H1 (cell line): ENCODE measurements at regions of chr5 and their contacts with region 1.

Region 1: GRCh38 chr5:126676195-126676624 is 75.5 kb downstream of the PHAX start:
- DNase-seq: peak in 1 of 2 experiments; percentile 62
- H3K4me3 ChIP-seq: no peak overlapping the region
- H3K27ac ChIP-seq: no peak overlapping the region
- H3K4me1 ChIP-seq: peaks cover 13 to 31% (median 19%) of the 10 kb centered on the region in 4 experiments
- H3K27me3 ChIP-seq: no peaks in the 10 kb centered on the region
- CTCF ChIP-seq: peak; percentile 3 to 87 (median 87)
- EP300 ChIP-seq: no peak
- POLR2A ChIP-seq: no peak
- RAD21 ChIP-seq: peak; percentile 91 to 95

Region 2: DNA sequence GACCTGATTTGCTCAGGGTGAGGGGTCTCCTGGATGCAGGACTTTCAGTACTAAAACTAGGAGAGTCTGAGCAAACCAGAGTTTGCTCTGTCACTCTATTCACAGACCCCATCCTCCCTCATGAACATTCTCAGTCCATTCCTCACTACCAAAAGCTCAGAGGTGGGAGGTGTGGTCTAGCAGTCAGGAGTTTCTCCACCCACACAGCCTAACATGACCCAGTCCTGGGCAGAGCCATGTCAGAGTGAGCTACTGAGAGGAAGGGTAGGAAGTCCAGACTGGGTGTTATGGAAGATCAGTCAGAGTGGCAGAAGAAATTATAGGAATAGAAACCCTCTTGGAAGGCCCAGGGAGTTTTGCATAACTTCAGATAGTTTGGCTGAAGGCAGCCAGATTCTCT is 366.4 kb before region 1 on chr5:
- CTCF ChIA-PET with region 1: no interaction called
- POLR2A ChIA-PET with region 1: no interaction called
- DNase-seq: no peak
- H3K4me3 ChIP-seq: no peak overlapping the region
- H3K27ac ChIP-seq: no peak overlapping the region
- H3K4me1 ChIP-seq: no peaks in the 10 kb centered on the region
- H3K27me3 ChIP-seq: no peaks in the 10 kb centered on the region; a peak in 1 of 7 replicates
- CTCF ChIP-seq: no peak
- EP300 ChIP-seq: no peak
- POLR2A ChIP-seq: no peak
- RAD21 ChIP-seq: no peak

Region 3: DNA sequence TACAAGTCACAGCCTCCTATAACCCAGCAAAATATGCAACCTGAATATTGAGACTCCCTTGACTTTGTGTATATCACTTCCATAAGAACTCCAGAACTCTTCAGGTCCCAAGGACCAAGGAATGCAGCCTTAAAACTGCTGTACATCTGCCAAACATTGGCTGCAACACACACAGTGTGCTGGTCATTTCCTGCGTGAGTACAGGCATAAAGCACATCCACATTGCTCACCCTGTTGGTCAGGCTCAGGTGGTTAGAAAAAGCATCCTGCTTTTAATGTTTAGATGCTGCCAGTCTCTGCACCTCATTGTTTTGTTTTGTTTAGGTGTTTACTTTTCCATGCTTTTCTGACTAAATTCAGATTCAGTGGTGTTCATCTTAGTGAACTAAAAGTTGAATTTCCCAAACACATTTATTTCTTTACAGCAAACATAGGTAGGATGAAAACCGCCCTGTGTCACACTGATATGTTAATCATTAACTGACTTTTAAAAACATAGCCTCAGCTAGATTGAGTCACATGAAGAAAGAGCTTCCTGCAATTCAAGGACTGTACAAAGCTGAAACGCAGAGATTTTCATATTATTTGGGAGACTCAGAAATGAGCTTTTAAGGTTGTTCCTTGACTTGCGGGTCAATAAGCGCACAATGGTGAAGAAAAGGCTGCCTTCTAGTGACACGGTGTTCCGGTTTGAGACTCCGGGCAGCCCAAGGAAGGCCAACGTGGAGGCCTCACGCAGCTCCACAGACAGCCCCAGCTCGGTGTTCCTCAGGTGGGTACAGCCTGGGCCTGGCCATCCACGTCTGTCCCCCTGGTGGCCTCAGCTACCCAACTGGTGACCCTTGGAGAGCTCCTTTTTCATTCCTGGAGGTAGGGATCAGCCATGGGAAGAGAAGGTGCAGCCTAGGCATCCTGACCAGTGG is 305.2 kb before region 1 on chr5:
- CTCF ChIA-PET with region 1: no interaction called
- POLR2A ChIA-PET with region 1: no interaction called
- DNase-seq: no peak
- H3K4me3 ChIP-seq: no peak overlapping the region
- H3K27ac ChIP-seq: no peak overlapping the region
- H3K4me1 ChIP-seq: peaks cover 9 to 25% (median 23%) of the 10 kb centered on the region in 4 experiments; a peak in 6 of 7 replicates
- H3K27me3 ChIP-seq: no peaks in the 10 kb centered on the region
- CTCF ChIP-seq: peak in 2 of 3 experiments; percentile 21 to 33; a peak in 3 of 4 replicates
- EP300 ChIP-seq: no peak
- POLR2A ChIP-seq: no peak
- RAD21 ChIP-seq: peak in 1 of 2 experiments; percentile 13; a peak in 1 of 4 replicates

Region 4: GRCh38 chr5:126656396-126657007 is 19.7 kb before region 1 on chr5:
- CTCF ChIA-PET with region 1: interaction called, 39 read pairs
- POLR2A ChIA-PET with region 1: interaction called, 3 read pairs
- DNase-seq: no peak
- H3K4me3 ChIP-seq: no peak overlapping the region
- H3K27ac ChIP-seq: no peak overlapping the region
- H3K4me1 ChIP-seq: peaks cover 0 to 4% (median 0%) of the 10 kb centered on the region in 4 experiments; a peak in 1 of 7 replicates
- H3K27me3 ChIP-seq: no peaks in the 10 kb centered on the region
- CTCF ChIP-seq: peak in 2 of 3 experiments; percentile 66 to 68; a peak in 3 of 4 replicates
- EP300 ChIP-seq: no peak
- POLR2A ChIP-seq: no peak
- RAD21 ChIP-seq: peak; percentile 94 to 95

Region 5: DNA sequence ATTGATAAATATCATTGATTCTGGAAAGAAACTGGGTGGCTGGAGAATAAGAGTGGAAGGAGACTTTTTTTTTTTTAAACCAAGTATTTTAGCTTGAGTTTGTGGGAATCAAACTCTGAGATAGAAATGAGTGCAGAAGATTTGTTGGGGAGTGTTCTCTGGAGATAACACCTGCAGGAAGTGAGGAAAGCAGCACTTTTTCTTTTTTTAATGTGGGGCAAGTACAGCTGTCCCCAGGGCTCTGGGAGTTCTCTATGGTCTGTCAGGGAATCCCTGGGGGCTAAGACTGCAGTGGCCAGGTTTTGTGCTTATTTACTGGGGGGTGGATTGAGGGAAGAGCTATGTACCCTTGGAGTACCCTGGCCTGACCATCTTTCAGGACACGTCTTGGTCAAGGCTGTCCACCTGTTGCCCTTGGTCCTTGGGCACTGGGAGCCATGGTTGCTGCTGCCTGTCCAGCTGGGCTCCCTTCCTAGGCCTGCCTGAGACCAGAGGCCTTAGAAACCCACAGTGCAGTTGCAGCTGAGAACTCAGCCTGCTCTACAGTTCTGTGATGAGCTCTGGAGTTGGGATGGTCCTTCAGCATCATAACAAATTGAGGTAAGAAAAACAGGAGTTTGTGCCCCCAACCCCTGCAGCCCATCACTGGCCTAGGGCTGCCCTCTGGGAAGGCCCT is 10.4 kb after region 1 on chr5:
- CTCF ChIA-PET with region 1: interaction called, 42 read pairs
- POLR2A ChIA-PET with region 1: interaction called, 3 read pairs
- DNase-seq: no peak
- H3K4me3 ChIP-seq: no peak overlapping the region
- H3K27ac ChIP-seq: peak overlapping the region; percentile 26; the same call in 1 of the 2 replicates
- H3K4me1 ChIP-seq: peaks cover 1 to 6% (median 2%) of the 10 kb centered on the region in 4 experiments; a peak in 4 of 7 replicates
- H3K27me3 ChIP-seq: no peaks in the 10 kb centered on the region
- CTCF ChIP-seq: no peak
- EP300 ChIP-seq: no peak
- POLR2A ChIP-seq: no peak
- RAD21 ChIP-seq: no peak

Region 6: GRCh38 chr5:126736141-126736540 is 59.9 kb after region 1 on chr5:
- CTCF ChIA-PET with region 1: interaction called, 11 read pairs
- POLR2A ChIA-PET with region 1: no interaction called
- DNase-seq: no peak
- H3K4me3 ChIP-seq: no peak overlapping the region
- H3K27ac ChIP-seq: no peak overlapping the region
- H3K4me1 ChIP-seq: peaks cover 0 to 4% (median 0%) of the 10 kb centered on the region in 4 experiments; a peak in 1 of 7 replicates
- H3K27me3 ChIP-seq: no peaks in the 10 kb centered on the region
- CTCF ChIP-seq: no peak
- EP300 ChIP-seq: no peak
- POLR2A ChIP-seq: no peak
- RAD21 ChIP-seq: no peak

Region 7: DNA sequence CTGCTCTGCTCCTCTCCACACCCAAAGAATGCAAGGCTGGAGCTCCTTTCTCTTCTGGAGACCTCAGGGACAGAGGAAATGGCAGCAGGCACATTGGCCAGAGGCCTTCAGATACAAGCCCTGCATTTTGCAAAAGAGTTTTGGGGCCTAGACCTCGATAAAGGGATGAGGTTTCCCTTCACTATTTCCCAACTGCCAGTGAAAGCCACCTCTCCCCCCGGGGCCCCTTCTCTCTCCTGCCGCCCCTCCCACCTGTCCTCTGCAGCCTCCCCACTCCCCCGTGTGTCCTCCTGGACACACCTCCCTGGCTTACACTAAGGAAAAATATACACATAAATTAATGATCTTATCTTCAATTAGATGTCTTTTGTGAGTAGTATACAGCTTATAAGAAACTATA is 79.4 kb after region 1 on chr5:
- CTCF ChIA-PET with region 1: interaction called, 12 read pairs
- POLR2A ChIA-PET with region 1: no interaction called
- DNase-seq: no peak
- H3K4me3 ChIP-seq: no peak overlapping the region
- H3K27ac ChIP-seq: no peak overlapping the region
- H3K4me1 ChIP-seq: peaks cover 0 to 4% (median 2%) of the 10 kb centered on the region in 4 experiments; a peak in 3 of 7 replicates
- H3K27me3 ChIP-seq: no peaks in the 10 kb centered on the region
- CTCF ChIP-seq: no peak
- EP300 ChIP-seq: no peak
- POLR2A ChIP-seq: no peak
- RAD21 ChIP-seq: no peak

Region 8: GRCh38 chr5:126801992-126802294 is 125.7 kb after region 1 on chr5:
- CTCF ChIA-PET with region 1: interaction called, 33 read pairs
- POLR2A ChIA-PET with region 1: interaction called, 3 read pairs
- DNase-seq: no peak
- H3K4me3 ChIP-seq: no peak overlapping the region; a peak in 1 of 8 replicates
- H3K27ac ChIP-seq: no peak overlapping the region
- H3K4me1 ChIP-seq: 0 out of 7 replicates have a peak, but pooled peaks cover 0 to 3% (median 0%) of the 10 kb centered on the region in 4 experiments
- H3K27me3 ChIP-seq: no peaks in the 10 kb centered on the region
- CTCF ChIP-seq: no peak
- EP300 ChIP-seq: no peak
- POLR2A ChIP-seq: no peak
- RAD21 ChIP-seq: peak; percentile 15 to 18; a peak in 3 of 4 replicates

Region 9: DNA sequence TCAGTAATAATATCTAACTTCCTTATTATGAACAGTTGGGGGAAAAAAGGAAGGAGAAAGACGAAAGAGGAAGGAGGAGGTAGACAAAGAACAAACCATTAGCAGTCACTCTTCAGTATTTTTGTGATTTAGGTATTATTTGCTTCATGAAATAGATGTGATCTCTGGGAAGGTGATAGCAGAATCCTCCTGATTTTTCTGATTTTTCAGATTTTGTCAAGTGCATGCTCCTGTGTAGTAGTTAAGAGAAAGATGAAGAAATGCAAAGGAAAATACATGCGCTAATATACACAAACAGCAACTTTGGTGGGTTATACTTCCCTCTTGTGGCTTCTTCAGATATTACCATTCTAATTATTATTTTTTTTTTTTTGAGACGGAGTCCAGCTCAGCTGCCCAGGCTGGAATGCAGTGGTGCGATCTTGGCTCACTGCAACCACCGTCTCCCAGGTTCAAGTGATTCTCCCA is 132.3 kb after region 1 on chr5:
- CTCF ChIA-PET with region 1: interaction called, 65 read pairs
- POLR2A ChIA-PET with region 1: interaction called, 3 read pairs
- DNase-seq: no peak
- H3K4me3 ChIP-seq: no peak overlapping the region
- H3K27ac ChIP-seq: no peak overlapping the region
- H3K4me1 ChIP-seq: no peaks in the 10 kb centered on the region
- H3K27me3 ChIP-seq: no peaks in the 10 kb centered on the region
- CTCF ChIP-seq: peak in 2 of 3 experiments; percentile 20 to 35; a peak in 2 of 4 replicates
- EP300 ChIP-seq: no peak
- POLR2A ChIP-seq: no peak
- RAD21 ChIP-seq: peak; percentile 49 to 53